ENCODE measurements at regions of chr2 and their contacts with region 1.

Region 1: DNA sequence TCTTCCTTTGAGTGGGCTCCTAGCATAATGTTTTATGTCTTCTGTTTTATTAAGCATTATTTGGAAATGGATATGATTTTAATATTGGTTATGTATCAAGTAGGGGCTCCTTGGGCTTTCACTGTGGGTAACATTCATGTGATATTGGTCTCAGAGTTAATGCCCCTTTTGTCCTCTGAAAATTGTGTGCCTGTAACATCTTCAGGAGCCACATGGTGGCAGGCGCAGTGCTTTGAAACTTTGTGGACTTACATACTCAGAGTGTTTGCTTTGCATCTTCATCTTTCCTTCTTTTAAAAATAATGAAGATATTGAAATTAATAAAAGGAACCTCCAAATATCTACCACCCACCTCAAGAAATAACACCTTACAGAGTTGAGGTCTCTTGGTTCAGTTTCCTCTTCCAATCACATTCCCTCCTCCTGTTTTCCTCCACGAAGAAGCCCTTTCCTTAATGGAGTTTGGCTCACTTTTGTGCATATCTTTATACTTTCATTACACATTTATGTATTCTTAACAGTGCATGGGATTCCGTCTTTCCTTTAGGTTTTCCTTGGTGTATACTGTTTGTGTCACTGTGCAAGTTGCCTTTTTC is 73.5 kb downstream of the LIMS1 start:
- DNase-seq: peak; percentile 48
- H3K4me3 Mint-ChIP-seq: no peak overlapping the region
- H3K27ac Mint-ChIP-seq: peak overlapping the region; percentile 36
- H3K4me1 Mint-ChIP-seq: peaks cover 20% of the 10 kb centered on the region
- H3K27me3 Mint-ChIP-seq: no peaks in the 10 kb centered on the region
- CTCF ChIP-seq: peak; percentile 48

Region 2: DNA sequence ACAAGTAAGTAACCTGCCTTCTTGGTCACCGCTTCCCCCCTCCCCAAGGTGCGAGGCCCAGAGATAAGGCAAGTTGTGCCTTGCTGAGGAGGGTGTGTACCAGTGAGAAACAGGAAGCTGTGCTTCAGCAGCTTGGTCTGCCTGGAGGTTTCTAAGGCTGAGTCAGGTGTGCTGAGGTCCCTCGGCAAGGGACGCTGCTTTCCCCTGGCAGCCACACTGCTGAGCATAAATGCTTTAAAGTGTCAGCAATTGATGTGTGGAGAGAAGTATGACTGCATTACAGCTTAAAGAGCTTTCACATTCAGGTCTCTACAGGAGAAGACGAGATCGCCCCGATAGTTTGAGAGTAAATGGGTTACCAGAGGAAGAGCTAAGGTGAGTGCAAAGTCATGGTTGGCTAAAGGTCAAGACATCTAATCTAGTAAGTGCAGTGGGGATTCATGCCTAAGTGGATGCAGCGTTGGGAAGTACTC is 13.3 kb after region 1 on chr2:
- CTCF ChIA-PET with region 1: interaction called, 4 read pairs
- POLR2A ChIA-PET with region 1: interaction called, 12 read pairs
- intact Hi-C with region 1: no loop called
- DNase-seq: peak; percentile 71
- H3K4me3 Mint-ChIP-seq: peak overlapping the region; percentile 67
- H3K27ac Mint-ChIP-seq: peak overlapping the region; percentile 78
- H3K4me1 Mint-ChIP-seq: peaks cover 40% of the 10 kb centered on the region
- H3K27me3 Mint-ChIP-seq: no peaks in the 10 kb centered on the region
- CTCF ChIP-seq: no peak

Measured in MCF 10A (cell line).